ENCODE measurements at regions of chr14 and their contacts with region 1.

Region 1: GRCh38 chr14:22994762-22995275 is 12.5 kb upstream of the AJUBA start:
- DNase-seq: peak in 5 of 9 donors; percentile 39 to 61 (median 53)
- ATAC-seq: peak; percentile 79
- H3K4me3 ChIP-seq: no peak overlapping the region
- H3K4me3 Mint-ChIP-seq: no peak overlapping the region
- H3K27ac ChIP-seq: no peak overlapping the region
- H3K27ac Mint-ChIP-seq: no peak overlapping the region
- H3K4me1 ChIP-seq: no peaks in the 10 kb centered on the region
- H3K4me1 Mint-ChIP-seq: peaks cover 0 to 5% (median 3%) of the 10 kb centered on the region in 7 donors
- H3K27me3 ChIP-seq: no peaks in the 10 kb centered on the region
- H3K27me3 Mint-ChIP-seq: no peaks in the 10 kb centered on the region

Region 2: GRCh38 chr14:23025151-23025814 is 30.5 kb after region 1 on chr14:
- CTCF ChIA-PET with region 1: interaction called, 10 read pairs
- POLR2A ChIA-PET with region 1: interaction called, 5 read pairs
- intact Hi-C with region 1: loop called in 1 of 2 experiments (anchors 5 kb)
- DNase-seq: no peak
- ATAC-seq: no peak
- H3K4me3 ChIP-seq: no peak overlapping the region
- H3K4me3 Mint-ChIP-seq: peak overlapping the region; percentile 4 to 78 (median 50)
- H3K27ac ChIP-seq: no peak overlapping the region
- H3K27ac Mint-ChIP-seq: peak overlapping the region; percentile 23 to 94 (median 86)
- H3K4me1 ChIP-seq: peaks cover 0 to 72% of the 10 kb centered on the region in 2 donors
- H3K4me1 Mint-ChIP-seq: peaks cover 49 to 83% (median 75%) of the 10 kb centered on the region in 7 donors
- H3K27me3 ChIP-seq: no peaks in the 10 kb centered on the region
- H3K27me3 Mint-ChIP-seq: no peaks in the 10 kb centered on the region

Region 3: DNA sequence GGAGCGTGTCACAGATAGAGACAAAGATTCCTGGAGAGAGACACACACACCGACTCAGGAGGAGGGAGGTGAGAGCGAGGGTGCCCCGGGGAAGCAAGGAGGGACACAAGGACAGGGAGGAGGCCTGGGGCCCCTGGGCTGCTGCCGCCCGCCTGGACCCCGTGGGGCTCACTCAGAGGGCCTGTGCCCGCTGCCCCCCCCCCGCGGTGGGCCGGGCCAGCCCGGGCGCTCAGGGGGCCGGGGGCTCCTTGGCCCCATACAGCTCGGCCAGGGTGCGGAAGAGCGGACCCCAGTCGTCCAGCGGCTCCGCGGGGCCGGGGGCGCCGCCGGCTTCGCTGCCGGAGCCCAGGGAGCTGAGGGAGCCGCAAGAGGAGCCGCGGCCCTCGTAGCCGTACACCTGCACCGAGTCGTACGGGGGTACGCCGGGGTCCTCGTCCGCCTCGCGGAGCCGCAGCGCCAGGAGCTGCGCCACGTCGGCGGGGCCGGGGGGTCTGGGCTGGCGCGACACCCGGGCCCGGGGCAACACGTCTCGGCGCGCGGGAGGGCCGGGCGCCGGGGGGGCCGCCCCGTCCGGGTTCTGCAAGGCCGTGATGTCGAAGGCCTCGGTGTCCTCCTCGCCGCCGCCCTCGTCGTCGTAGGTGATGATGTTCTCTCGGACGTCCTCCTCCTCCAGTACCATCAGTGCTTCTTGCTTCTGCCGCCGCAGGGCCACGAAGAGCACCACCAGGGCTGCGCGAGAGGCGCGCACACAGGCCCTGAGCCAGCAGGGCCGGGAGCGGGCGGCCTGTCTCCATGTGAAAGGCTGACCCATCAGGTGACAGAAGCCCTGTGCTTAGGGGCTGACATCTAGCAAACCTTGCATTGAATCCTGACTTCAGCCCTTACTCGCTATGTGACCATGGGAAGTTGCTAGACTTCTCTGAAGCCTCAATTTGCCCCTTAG is 53.2 kb after region 1 on chr14:
- CTCF ChIA-PET with region 1: interaction called, 264 read pairs
- POLR2A ChIA-PET with region 1: no interaction called
- intact Hi-C with region 1: no loop called
- DNase-seq: no peak
- ATAC-seq: no peak
- H3K4me3 ChIP-seq: no peak overlapping the region
- H3K4me3 Mint-ChIP-seq: no peak overlapping the region
- H3K27ac ChIP-seq: no peak overlapping the region
- H3K27ac Mint-ChIP-seq: peak overlapping the region in 3 of 9 donors; percentile 29 to 65 (median 39)
- H3K4me1 ChIP-seq: no peaks in the 10 kb centered on the region
- H3K4me1 Mint-ChIP-seq: peaks cover 0 to 9% (median 0%) of the 10 kb centered on the region in 7 donors
- H3K27me3 ChIP-seq: no peaks in the 10 kb centered on the region
- H3K27me3 Mint-ChIP-seq: peaks cover 0 to 5% (median 0%) of the 10 kb centered on the region in 5 donors

Region 4: DNA sequence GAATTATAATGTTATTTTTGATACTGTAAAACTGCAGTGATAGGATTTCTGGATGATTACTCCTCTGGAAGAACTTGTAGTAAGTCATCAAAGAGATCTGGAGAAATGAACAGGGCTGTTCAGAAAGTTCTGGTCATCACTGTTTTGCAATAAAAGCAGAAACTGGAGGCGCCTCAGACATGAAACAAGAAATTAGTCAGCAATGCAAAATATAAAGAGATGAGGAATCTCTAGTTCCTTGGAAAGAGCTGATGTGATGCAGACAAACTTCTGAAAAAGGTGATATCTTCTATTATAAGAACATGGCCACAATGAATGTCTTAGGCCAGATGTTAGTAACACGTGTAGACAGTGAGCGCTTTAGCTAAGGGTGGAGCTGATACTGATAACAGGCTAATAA is 90.6 kb after region 1 on chr14:
- CTCF ChIA-PET with region 1: interaction called, 11 read pairs
- POLR2A ChIA-PET with region 1: interaction called, 3 read pairs
- intact Hi-C with region 1: no loop called
- DNase-seq: no peak
- ATAC-seq: no peak
- H3K4me3 ChIP-seq: no peak overlapping the region
- H3K4me3 Mint-ChIP-seq: no peak overlapping the region
- H3K27ac ChIP-seq: no peak overlapping the region
- H3K27ac Mint-ChIP-seq: peak overlapping the region in 2 of 9 donors; percentile 8 to 57
- H3K4me1 ChIP-seq: no peaks in the 10 kb centered on the region
- H3K4me1 Mint-ChIP-seq: peaks cover 14 to 48% (median 41%) of the 10 kb centered on the region in 7 donors
- H3K27me3 ChIP-seq: no peaks in the 10 kb centered on the region
- H3K27me3 Mint-ChIP-seq: no peaks in the 10 kb centered on the region

Measured in naive thymus-derived CD4-positive, alpha-beta T cell (primary cell).